ENCODE measurements at regions of chr16 and their contacts with region 1.

Region 1: DNA sequence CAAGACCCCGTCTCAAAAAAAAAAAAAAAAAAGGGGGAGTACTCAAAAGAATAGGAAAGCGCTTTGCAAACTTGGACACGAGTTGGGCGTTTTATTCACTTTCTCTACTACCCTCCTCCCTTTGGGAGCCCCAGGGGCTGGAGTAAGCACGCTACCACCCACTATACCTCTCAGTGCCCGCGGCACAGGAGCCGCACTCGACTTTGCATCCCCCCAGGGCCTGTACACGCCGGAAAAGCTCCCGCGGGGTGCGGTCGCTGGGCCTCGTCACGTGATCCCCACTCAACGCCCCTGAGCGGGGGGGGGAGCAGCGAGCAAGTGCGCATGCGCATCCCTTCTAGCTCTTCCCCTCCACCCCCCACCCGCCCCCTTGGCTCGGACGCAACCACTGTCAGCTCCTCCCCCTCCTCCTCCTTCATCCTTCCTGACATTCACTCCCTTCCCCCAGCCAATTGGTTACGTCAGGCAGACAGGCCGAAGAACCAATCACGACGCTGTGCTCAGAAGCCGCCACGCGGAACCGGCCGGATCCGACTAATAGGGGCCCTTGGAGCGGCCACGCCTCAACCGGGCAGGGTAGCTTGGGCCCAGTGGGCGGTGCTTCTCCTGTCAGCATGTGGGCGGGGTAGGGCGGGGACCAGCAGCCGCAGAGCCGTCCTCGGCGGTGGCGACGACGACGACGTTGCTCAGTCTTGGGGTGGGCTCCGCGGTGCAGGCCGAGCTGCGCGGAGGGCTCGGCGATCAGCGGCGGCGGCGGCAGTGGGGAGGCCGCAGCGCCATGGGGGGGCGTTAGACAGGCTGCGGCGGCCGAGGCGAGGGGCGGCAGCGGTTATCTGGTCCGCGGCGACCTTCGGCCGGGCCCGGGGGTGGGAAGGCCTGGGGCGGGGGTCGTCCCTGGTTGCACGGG is at the start of gene HAPSTR1:
- DNase-seq: peak; percentile 99 to 100
- H3K4me3 ChIP-seq: peak within 1 kb of the TSS; percentile 83 to 98
- H3K27ac ChIP-seq: peak within 1 kb of the TSS; percentile 96 to 98
- H3K4me1 ChIP-seq: peaks cover 6 to 25% of the 10 kb centered on the region in 2 donors
- H3K27me3 ChIP-seq: no peaks in the 10 kb centered on the region
- CTCF ChIP-seq: no peak
- total RNA-seq, gene HAPSTR1: 22.0 TPM

Region 2: DNA sequence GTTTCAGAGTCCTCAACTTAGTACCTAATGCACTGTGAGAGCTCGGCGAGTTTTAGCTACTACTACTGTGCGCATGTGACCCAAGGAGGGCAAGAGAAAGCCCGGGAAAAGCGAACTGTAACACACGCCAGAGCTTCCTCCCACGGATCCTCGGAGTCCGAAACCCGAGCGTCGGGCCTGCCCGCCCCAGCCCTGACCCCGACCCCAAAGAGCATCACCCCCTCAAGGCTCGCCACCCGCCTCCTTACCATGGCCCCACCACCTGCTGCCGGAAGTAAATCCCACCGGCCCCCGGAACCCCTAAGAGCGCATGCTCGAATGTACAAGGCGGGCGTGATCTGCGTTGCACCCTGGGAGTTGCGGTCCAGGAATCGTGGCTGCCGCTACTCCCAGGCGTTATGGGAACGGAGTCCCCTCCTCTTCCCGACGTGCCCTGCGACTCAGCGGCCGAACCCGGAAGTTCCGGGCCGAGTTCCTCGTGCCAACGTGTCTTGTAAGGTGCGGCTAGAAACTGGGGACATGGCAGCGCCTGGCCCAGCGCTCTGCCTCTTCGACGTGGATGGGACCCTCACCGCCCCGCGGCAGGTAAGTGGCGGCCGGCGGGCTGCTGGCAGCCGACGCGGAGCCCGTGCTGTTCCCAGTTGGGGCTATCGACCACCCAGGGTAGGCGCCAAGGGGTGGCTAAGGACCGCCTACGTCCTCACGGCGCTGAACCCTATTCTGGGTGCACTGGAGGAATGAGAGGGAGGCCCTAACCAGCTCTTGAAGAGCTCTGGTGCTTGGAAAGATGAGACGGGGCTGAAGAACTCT is 293.6 kb before region 1 on chr16 and contains the starts of genes PMM2 and TMEM186:
- intact Hi-C with region 1: loop called (anchors 10 kb)
- DNase-seq: peak; percentile 85 to 98
- H3K4me3 ChIP-seq: peak within 1 kb of the TSS; percentile 92 to 93
- H3K27ac ChIP-seq: peak within 1 kb of the TSS; percentile 71 to 90
- H3K4me1 ChIP-seq: peaks cover 5 to 29% of the 10 kb centered on the region in 2 donors
- H3K27me3 ChIP-seq: no peaks in the 10 kb centered on the region
- CTCF ChIP-seq: no peak
- total RNA-seq, gene PMM2: 17.9 TPM
- total RNA-seq, gene TMEM186: 1.5 TPM

Region 3: DNA sequence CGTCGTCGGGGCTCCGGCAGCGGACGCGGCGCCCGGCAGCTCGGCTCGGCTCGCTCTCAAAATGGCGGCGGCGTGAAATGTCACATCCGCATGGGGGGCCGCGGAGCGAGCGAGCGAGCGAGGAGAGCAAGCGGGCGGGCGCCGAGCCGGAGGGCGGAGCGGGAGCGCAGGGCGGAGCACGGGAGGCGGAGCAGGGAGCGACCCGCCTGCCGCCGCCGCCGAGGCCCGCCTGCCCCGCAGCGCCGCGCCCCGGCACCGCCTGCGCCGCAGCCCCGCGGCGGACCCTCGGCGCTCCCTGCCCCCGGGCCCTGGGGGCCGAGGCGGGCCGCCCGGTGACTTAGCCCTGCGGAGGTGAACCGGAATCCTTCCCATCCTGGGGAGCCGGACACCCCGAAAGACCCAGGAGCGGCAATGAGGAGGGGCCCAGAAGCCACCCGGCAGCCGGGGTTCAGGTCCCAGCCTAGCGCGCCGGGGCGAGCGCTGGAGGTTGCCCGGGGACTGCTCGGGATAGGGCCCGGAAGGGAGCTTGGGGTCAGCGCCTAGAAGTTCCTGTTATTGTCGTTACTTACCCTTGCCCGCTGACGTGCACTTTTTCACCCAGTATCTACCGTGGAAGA is 127.3 kb before region 1 on chr16 and contains the start of gene USP7:
- intact Hi-C with region 1: loop called (anchors 2 kb)
- DNase-seq: peak; percentile 51 to 95
- H3K4me3 ChIP-seq: peak within 1 kb of the TSS; percentile 75 to 84
- H3K27ac ChIP-seq: peak within 1 kb of the TSS; percentile 75 to 78
- H3K4me1 ChIP-seq: peaks cover 15 to 31% of the 10 kb centered on the region in 2 donors
- H3K27me3 ChIP-seq: no peaks in the 10 kb centered on the region
- CTCF ChIP-seq: no peak
- total RNA-seq, gene USP7: 55.3 TPM

Region 4: DNA sequence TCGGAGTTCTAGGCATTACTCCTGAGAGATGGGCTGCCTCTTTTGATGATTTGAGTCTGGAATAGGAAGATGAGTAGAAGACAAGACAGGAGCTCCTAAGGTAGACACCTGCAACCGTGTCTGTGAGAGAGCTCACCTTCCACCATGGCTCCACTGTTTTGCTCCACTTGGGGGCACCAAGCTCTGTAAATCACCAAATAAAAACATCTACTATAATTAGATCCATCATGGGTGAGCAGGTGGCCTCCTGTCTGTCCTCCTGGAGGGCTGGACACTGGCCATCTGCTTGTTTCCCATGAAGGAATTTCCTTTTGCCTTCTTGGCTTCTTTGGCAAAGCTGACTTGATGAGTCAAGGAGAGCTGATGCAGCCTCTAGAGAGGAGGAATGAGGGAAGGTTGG is 179.2 kb after region 1 on chr16:
- intact Hi-C with region 1: no loop called
- DNase-seq: no peak
- H3K4me3 ChIP-seq: no peak overlapping the region
- H3K27ac ChIP-seq: no peak overlapping the region
- H3K4me1 ChIP-seq: no peaks in the 10 kb centered on the region
- H3K27me3 ChIP-seq: no peaks in the 10 kb centered on the region
- CTCF ChIP-seq: no peak

Region 5: GRCh38 chr16:9365376-9365728 is 274.1 kb after region 1 on chr16:
- intact Hi-C with region 1: loop called (anchors 5 kb)
- DNase-seq: peak; percentile 66 to 93
- H3K4me3 ChIP-seq: no peak overlapping the region
- H3K27ac ChIP-seq: peak overlapping the region; percentile 54 to 72
- H3K4me1 ChIP-seq: peaks cover 7 to 16% of the 10 kb centered on the region in 2 donors
- H3K27me3 ChIP-seq: no peaks in the 10 kb centered on the region
- CTCF ChIP-seq: no peak

Region 6: GRCh38 chr16:10743610-10744393 is 1652.6 kb after region 1 on chr16 and contains the start of gene NUBP1:
- intact Hi-C with region 1: loop called (anchors 5 kb)
- DNase-seq: peak; percentile 99 to 100
- H3K4me3 ChIP-seq: peak within 1 kb of the TSS; percentile 66 to 71
- H3K27ac ChIP-seq: peak within 1 kb of the TSS; percentile 95
- H3K4me1 ChIP-seq: peaks cover 12 to 24% of the 10 kb centered on the region in 2 donors
- H3K27me3 ChIP-seq: no peaks in the 10 kb centered on the region
- CTCF ChIP-seq: no peak
- total RNA-seq, gene NUBP1: 13.3 TPM

Measured in ascending aorta (tissue), 2 donors.